ENCODE measurements at regions of chr2 and their contacts with region 1.

Region 1: GRCh38 chr2:161965994-161966393 is 108.0 kb downstream of the DPP4 start:
- DNase-seq: no peak
- H3K4me3 Mint-ChIP-seq: no peak overlapping the region
- H3K27ac Mint-ChIP-seq: peak overlapping the region; percentile 28
- H3K4me1 Mint-ChIP-seq: peaks cover 28% of the 10 kb centered on the region
- H3K27me3 Mint-ChIP-seq: peaks cover 1% of the 10 kb centered on the region

Region 2: GRCh38 chr2:161905389-161906046 is 60.5 kb before region 1 on chr2:
- CTCF ChIA-PET with region 1: no interaction called
- POLR2A ChIA-PET with region 1: no interaction called
- intact Hi-C with region 1: loop called (anchors 2 kb)
- DNase-seq: peak; percentile 43
- H3K4me3 Mint-ChIP-seq: no peak overlapping the region
- H3K27ac Mint-ChIP-seq: peak overlapping the region; percentile 66
- H3K4me1 Mint-ChIP-seq: peaks cover 10% of the 10 kb centered on the region
- H3K27me3 Mint-ChIP-seq: no peaks in the 10 kb centered on the region

Region 3: GRCh38 chr2:161992526-161992925 is 26.5 kb after region 1 on chr2:
- CTCF ChIA-PET with region 1: interaction called, 5 read pairs
- POLR2A ChIA-PET with region 1: no interaction called
- intact Hi-C with region 1: loop called (anchors 1 kb)
- DNase-seq: peak; percentile 77
- H3K4me3 Mint-ChIP-seq: peak overlapping the region; percentile 73
- H3K27ac Mint-ChIP-seq: peak overlapping the region; percentile 92
- H3K4me1 Mint-ChIP-seq: peaks cover 61% of the 10 kb centered on the region
- H3K27me3 Mint-ChIP-seq: no peaks in the 10 kb centered on the region

Region 4: DNA sequence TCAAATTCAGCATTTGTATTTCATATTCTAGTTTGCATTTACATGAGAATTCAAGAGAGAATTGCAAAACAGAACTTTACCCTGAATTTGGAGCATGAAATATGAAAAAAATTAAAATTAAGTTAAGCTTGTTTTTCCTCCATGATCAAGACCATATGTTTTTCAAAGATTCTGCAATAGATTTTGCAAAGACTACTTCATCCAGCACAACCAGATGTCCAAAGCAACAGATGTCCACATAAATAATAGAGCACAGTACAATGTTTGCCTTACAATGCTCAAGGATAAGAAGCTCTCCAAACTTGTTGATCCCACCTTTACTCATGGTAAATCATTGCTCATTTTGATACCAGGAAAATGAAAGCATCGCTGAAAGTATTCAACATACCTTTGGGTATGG is 251.6 kb after region 1 on chr2:
- CTCF ChIA-PET with region 1: no interaction called
- POLR2A ChIA-PET with region 1: no interaction called
- intact Hi-C with region 1: no loop called
- DNase-seq: no peak
- H3K4me3 Mint-ChIP-seq: no peak overlapping the region
- H3K27ac Mint-ChIP-seq: no peak overlapping the region
- H3K4me1 Mint-ChIP-seq: no peaks in the 10 kb centered on the region
- H3K27me3 Mint-ChIP-seq: peaks cover 6% of the 10 kb centered on the region

Measured in activated CD4-positive, alpha-beta memory T cell treated with anti-CD3 and anti-CD28 coated beads for 36 hours (primary cell).